CD8-positive, alpha-beta T cell (primary cell): ENCODE measurements at regions of chr19 and their contacts with region 1.

Region 1: DNA sequence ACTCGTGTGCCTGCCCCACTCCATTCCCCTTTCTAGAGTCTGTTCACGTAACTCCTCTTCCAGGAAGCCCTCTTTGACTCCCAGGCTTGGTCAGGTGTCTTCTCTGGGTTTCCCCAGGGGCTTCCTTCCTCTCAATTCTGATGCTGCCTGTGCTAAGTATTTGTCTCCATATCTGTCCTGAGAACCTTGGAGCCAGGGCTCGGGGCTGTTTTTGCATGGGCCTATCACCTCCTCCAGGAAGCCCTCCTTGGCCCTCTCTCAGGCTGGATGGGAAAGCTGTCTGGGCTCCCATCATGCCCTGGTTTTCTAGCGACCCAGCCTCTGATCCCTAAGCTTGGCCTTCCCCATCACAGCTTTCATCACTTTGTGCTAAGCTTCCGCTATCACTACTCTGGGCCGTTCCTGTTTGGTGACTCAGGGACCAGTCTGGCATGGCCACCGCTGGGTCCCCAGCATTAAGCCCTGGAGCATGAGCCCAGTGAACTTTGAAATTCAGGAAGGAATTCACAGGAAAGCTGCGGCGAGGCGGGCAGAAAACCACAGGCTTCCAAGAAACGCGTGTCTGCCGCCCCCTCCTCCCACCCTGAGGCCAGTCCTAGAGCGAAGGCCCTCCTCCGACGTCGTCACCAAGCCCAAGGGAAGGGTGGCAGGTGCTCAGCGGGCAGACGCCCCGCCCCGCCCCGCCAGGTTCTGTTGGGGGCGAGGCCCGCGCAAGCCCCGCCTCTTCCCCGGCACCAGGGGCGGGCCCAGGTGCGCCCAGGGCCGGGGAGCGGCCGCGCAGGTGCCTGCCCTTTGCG is 486 bp upstream of the SPINT2 start:
- DNase-seq: peak; percentile 42 to 86 (median 74)
- ATAC-seq: peak; percentile 92
- H3K4me3 ChIP-seq: peak overlapping the region; percentile 62 to 89
- H3K4me3 Mint-ChIP-seq: peak overlapping the region; percentile 88
- H3K27ac ChIP-seq: peak overlapping the region in 1 of 2 experiments; percentile 63
- H3K27ac Mint-ChIP-seq: peak overlapping the region; percentile 79
- H3K4me1 ChIP-seq: peaks cover 24% of the 10 kb centered on the region
- H3K4me1 Mint-ChIP-seq: peaks cover 42% of the 10 kb centered on the region
- H3K27me3 ChIP-seq: no peaks in the 10 kb centered on the region
- H3K27me3 Mint-ChIP-seq: peaks cover 2% of the 10 kb centered on the region
- CTCF ChIP-seq: no peak

Region 2: GRCh38 chr19:38315657-38316476 is 52.0 kb after region 1 on chr19 and contains the start of gene YIF1B:
- CTCF ChIA-PET with region 1: no interaction called
- POLR2A ChIA-PET with region 1: interaction called, 3 read pairs
- intact Hi-C with region 1: loop called (anchors 1 kb)
- DNase-seq: peak; percentile 91 to 98 (median 94)
- ATAC-seq: peak; percentile 92
- H3K4me3 ChIP-seq: peak within 1 kb of the TSS; percentile 60 to 68
- H3K4me3 Mint-ChIP-seq: peak within 1 kb of the TSS; percentile 86
- H3K27ac ChIP-seq: peak within 1 kb of the TSS; percentile 93 to 95
- H3K27ac Mint-ChIP-seq: peak within 1 kb of the TSS; percentile 95
- H3K4me1 ChIP-seq: peaks cover 34% of the 10 kb centered on the region
- H3K4me1 Mint-ChIP-seq: peaks cover 52% of the 10 kb centered on the region
- H3K27me3 ChIP-seq: peaks cover 0 to 2% of the 10 kb centered on the region in 2 experiments
- H3K27me3 Mint-ChIP-seq: no peaks in the 10 kb centered on the region
- CTCF ChIP-seq: no peak
- total RNA-seq, gene YIF1B: 12.0 to 13.0 TPM